MCF 10A (cell line): ENCODE measurements at regions of chr11 and their contacts with region 1.

Region 1: GRCh38 chr11:27429761-27430412 is 42.7 kb downstream of the LGR4 start:
- DNase-seq: peak; percentile 21
- H3K4me3 Mint-ChIP-seq: no peak overlapping the region
- H3K27ac Mint-ChIP-seq: no peak overlapping the region
- H3K4me1 Mint-ChIP-seq: peaks cover 14% of the 10 kb centered on the region
- H3K27me3 Mint-ChIP-seq: no peaks in the 10 kb centered on the region
- CTCF ChIP-seq: no peak

Region 2: GRCh38 chr11:27443746-27444507 is 14.0 kb after region 1 on chr11:
- CTCF ChIA-PET with region 1: interaction called, 6 read pairs
- POLR2A ChIA-PET with region 1: interaction called, 13 read pairs
- intact Hi-C with region 1: no loop called
- DNase-seq: no peak
- H3K4me3 Mint-ChIP-seq: no peak overlapping the region
- H3K27ac Mint-ChIP-seq: no peak overlapping the region
- H3K4me1 Mint-ChIP-seq: peaks cover 14% of the 10 kb centered on the region
- H3K27me3 Mint-ChIP-seq: no peaks in the 10 kb centered on the region
- CTCF ChIP-seq: no peak